H1 (cell line): ENCODE measurements at regions of chr9 and their contacts with region 1.

Region 1: GRCh38 chr9:134171316-134172197 is 7.2 kb upstream of the RNU6ATAC start:
- DNase-seq: no peak
- H3K4me3 ChIP-seq: no peak overlapping the region
- H3K27ac ChIP-seq: no peak overlapping the region
- H3K4me1 ChIP-seq: peaks cover 0 to 19% (median 12%) of the 10 kb centered on the region in 4 experiments; a peak in 6 of 7 replicates
- H3K27me3 ChIP-seq: no peaks in the 10 kb centered on the region
- CTCF ChIP-seq: no peak
- EP300 ChIP-seq: no peak
- POLR2A ChIP-seq: no peak
- RAD21 ChIP-seq: no peak

Region 2: DNA sequence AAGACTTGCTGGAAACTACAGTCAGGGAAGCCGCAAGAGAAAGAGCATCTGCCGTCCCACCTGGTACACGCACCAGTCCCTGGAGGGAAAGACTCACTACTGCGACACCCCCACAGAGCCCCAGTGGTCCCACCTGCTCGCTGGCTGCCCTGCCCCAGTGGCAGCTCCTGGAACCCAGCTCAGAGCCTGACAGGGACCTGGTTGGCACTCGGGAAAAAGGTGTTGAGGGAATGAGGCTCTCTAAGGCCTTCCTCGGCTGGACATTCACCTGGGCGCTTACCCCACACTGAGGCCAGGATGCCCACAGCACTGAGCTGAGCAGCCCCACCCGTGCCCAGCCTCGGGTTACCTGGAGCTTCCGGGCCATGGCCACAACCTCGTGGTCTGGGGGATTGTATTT is 126.6 kb before region 1 on chr9:
- CTCF ChIA-PET with region 1: no interaction called
- POLR2A ChIA-PET with region 1: no interaction called
- DNase-seq: no peak
- H3K4me3 ChIP-seq: no peak overlapping the region
- H3K27ac ChIP-seq: no peak overlapping the region
- H3K4me1 ChIP-seq: no peaks in the 10 kb centered on the region; a peak in 1 of 7 replicates
- H3K27me3 ChIP-seq: no peaks in the 10 kb centered on the region
- CTCF ChIP-seq: no peak
- EP300 ChIP-seq: no peak
- POLR2A ChIP-seq: no peak
- RAD21 ChIP-seq: no peak

Region 3: GRCh38 chr9:134125413-134126095 is 46.0 kb before region 1 on chr9:
- CTCF ChIA-PET with region 1: no interaction called
- POLR2A ChIA-PET with region 1: no interaction called
- DNase-seq: no peak
- H3K4me3 ChIP-seq: no peak overlapping the region
- H3K27ac ChIP-seq: no peak overlapping the region
- H3K4me1 ChIP-seq: 0 out of 7 replicates have a peak, but pooled peaks cover 0 to 3% (median 0%) of the 10 kb centered on the region in 4 experiments
- H3K27me3 ChIP-seq: no peaks in the 10 kb centered on the region
- CTCF ChIP-seq: no peak
- EP300 ChIP-seq: no peak
- POLR2A ChIP-seq: no peak
- RAD21 ChIP-seq: no peak

Region 4: GRCh38 chr9:134149380-134149779 is 22.2 kb before region 1 on chr9:
- CTCF ChIA-PET with region 1: no interaction called
- POLR2A ChIA-PET with region 1: no interaction called
- DNase-seq: no peak
- H3K4me3 ChIP-seq: no peak overlapping the region
- H3K27ac ChIP-seq: no peak overlapping the region
- H3K4me1 ChIP-seq: no peaks in the 10 kb centered on the region
- H3K27me3 ChIP-seq: no peaks in the 10 kb centered on the region
- CTCF ChIP-seq: no peak
- EP300 ChIP-seq: no peak
- POLR2A ChIP-seq: no peak
- RAD21 ChIP-seq: no peak

Region 5: DNA sequence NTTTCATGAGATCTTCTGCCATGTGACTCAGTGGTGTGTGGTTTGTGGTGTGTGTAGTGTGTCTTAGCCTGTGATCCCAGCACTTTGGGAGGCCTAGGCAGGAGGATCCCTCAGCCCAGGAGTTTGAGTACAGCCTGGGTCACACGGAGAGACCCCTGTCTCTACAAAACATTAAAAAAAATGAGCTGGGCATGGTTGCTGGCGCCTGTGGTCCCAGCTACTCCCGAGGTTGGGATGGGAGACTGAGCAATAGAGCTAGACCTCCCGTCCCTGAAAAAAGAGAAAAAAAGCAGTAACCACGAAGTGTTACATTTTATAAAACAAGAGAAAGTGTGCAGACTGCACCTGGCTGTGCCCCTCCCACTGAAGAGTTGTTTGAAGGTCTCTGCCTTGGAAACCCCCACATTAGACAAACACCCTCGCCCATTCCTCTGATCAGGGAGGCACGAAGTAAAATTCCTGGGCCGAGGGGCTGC is 14.0 kb after region 1 on chr9:
- CTCF ChIA-PET with region 1: interaction called, 14 read pairs
- POLR2A ChIA-PET with region 1: interaction called, 5 read pairs
- DNase-seq: no peak
- H3K4me3 ChIP-seq: no peak overlapping the region
- H3K27ac ChIP-seq: no peak overlapping the region
- H3K4me1 ChIP-seq: peaks cover 0 to 17% (median 4%) of the 10 kb centered on the region in 4 experiments; a peak in 4 of 7 replicates
- H3K27me3 ChIP-seq: peaks cover 0 to 6% (median 2%) of the 10 kb centered on the region in 4 experiments; a peak in 4 of 7 replicates
- CTCF ChIP-seq: no peak
- EP300 ChIP-seq: no peak
- POLR2A ChIP-seq: no peak
- RAD21 ChIP-seq: no peak

Region 6: GRCh38 chr9:134217832-134218629 is 46.5 kb after region 1 on chr9:
- CTCF ChIA-PET with region 1: interaction called, 16 read pairs
- POLR2A ChIA-PET with region 1: interaction called, 3 read pairs
- DNase-seq: no peak
- H3K4me3 ChIP-seq: no peak overlapping the region
- H3K27ac ChIP-seq: no peak overlapping the region
- H3K4me1 ChIP-seq: peaks cover 0 to 2% (median 0%) of the 10 kb centered on the region in 4 experiments; a peak in 2 of 7 replicates
- H3K27me3 ChIP-seq: no peaks in the 10 kb centered on the region
- CTCF ChIP-seq: peak in 2 of 3 experiments; percentile 24 to 27; a peak in 3 of 4 replicates
- EP300 ChIP-seq: no peak
- POLR2A ChIP-seq: no peak
- RAD21 ChIP-seq: peak; percentile 28 to 51; a peak in 3 of 4 replicates

Region 7: GRCh38 chr9:134226221-134226930 is 54.8 kb after region 1 on chr9:
- CTCF ChIA-PET with region 1: interaction called, 12 read pairs
- POLR2A ChIA-PET with region 1: no interaction called
- DNase-seq: no peak
- H3K4me3 ChIP-seq: no peak overlapping the region
- H3K27ac ChIP-seq: no peak overlapping the region
- H3K4me1 ChIP-seq: peaks cover 0 to 5% (median 1%) of the 10 kb centered on the region in 4 experiments; a peak in 4 of 7 replicates
- H3K27me3 ChIP-seq: no peaks in the 10 kb centered on the region; a peak in 1 of 7 replicates
- CTCF ChIP-seq: no peak
- EP300 ChIP-seq: no peak
- POLR2A ChIP-seq: no peak
- RAD21 ChIP-seq: no peak

Region 8: DNA sequence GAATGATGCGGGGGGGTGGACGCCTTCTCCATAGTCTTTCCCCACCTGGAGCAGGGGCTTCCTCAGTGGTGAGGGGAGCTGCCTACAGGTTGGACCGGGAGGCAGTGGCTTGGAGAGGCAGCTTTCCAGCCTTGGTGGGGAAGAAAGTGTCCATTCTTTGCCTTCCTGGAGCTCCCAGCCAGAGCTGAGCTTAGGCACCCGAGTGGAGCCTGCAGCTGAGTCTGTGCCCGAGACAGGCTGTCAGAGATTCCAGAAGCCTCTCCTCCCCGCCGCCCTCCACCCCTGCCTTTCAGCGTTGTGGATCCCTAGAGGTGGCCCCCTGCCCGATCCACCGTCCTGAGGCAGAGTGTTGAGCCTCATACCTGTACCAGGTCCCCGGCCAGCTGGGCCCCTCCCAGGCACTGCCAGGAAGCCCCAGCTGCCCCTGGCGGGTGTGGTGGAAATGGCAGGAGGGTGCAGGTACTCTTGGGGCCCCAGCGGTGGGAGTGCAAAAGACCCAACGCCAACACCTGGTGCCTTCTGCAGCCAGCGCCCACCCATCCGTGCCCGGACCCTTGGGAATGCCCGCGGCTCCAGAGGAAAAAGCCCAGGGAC is 266.7 kb after region 1 on chr9:
- CTCF ChIA-PET with region 1: interaction called, 53 read pairs
- POLR2A ChIA-PET with region 1: no interaction called
- DNase-seq: peak in 1 of 2 experiments; percentile 74
- H3K4me3 ChIP-seq: no peak overlapping the region
- H3K27ac ChIP-seq: no peak overlapping the region
- H3K4me1 ChIP-seq: peaks cover 0 to 9% (median 4%) of the 10 kb centered on the region in 4 experiments; a peak in 4 of 7 replicates
- H3K27me3 ChIP-seq: no peaks in the 10 kb centered on the region
- CTCF ChIP-seq: peak in 2 of 3 experiments; percentile 43 to 54; a peak in 3 of 4 replicates
- EP300 ChIP-seq: no peak
- POLR2A ChIP-seq: no peak
- RAD21 ChIP-seq: peak; percentile 34 to 51; a peak in 3 of 4 replicates